ENCODE measurements at regions of chr12 and their contacts with region 1.

Region 1: GRCh38 chr12:117367011-117367638 is 5.7 kb upstream of the NOS1 start:
- DNase-seq: peak; percentile 31 to 95 (median 86)

Region 2: GRCh38 chr12:117587631-117588287 is 220.6 kb after region 1 on chr12:
- intact Hi-C with region 1: loop called (anchors 2 kb)
- DNase-seq: peak; percentile 10 to 84 (median 56)

Region 3: DNA sequence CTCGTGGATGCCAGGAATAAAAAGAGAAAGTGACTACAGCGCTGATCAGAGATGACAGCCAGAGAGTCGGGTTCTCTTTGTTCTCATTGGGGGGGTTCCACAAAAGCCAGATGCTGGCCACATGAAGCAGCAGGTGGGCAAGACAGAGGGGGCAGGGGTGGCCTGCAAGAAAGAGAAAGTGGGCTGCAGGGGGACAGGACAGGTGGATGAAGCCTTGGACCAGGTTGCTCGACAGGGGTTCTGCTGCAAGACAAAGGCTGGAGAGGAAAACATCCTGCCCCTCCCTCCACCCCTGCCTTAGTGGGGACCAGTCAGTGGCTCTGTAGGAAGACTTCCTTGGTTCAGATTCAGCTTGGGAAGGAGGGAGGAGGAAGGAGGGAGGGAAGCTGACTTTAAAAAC is 475.5 kb after region 1 on chr12:
- intact Hi-C with region 1: loop called (anchors 5 kb)
- DNase-seq: no peak